ENCODE measurements at regions of chr11 and their contacts with region 1.

Region 1: GRCh38 chr11:130131961-130132850 is 27.4 kb upstream of the ST14 start:
- DNase-seq: peak; percentile 46
- H3K4me3 Mint-ChIP-seq: no peak overlapping the region
- H3K27ac Mint-ChIP-seq: no peak overlapping the region
- H3K4me1 Mint-ChIP-seq: no peaks in the 10 kb centered on the region
- H3K27me3 Mint-ChIP-seq: no peaks in the 10 kb centered on the region

Region 2: DNA sequence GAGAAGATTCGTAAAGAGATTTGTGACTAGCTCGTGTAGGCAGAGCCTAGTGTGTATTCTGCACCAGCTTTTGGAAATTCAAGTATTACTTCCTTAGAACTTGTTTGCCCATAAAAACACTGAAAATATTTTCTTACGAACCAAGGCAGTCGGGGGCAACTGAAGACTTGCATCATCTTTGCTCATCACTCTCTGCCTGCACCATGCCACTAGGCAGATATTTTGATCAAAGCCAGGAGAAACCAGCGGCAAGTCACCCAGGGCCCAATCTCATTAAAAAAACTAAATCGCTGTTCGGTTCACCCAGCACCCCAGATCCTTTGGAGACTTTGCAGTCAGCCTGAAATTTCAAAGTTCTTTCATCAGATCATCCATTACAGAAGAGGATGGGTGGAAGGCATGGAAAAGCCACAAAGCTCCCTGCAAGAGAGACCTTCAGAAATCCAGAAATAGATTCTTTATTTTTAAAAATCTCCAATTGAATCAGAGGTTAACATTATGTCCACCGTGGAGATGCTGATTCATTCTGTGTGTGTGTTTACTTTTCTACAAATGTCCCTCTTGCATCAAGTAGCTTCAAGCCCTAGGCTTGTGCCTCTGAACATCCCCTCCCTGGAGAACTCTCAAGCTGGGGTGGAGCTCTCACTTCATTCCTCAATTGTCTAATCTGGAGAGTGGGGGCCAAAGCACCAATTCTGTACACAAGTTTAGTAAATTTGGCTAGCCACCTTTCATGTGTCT is 1623.3 kb before region 1 on chr11:
- intact Hi-C with region 1: no loop called
- DNase-seq: no peak
- H3K4me3 Mint-ChIP-seq: peak overlapping the region; percentile 96
- H3K27ac Mint-ChIP-seq: peak overlapping the region; percentile 98
- H3K4me1 Mint-ChIP-seq: peaks cover 100% of the 10 kb centered on the region
- H3K27me3 Mint-ChIP-seq: peaks cover 1% of the 10 kb centered on the region

Region 3: GRCh38 chr11:129364143-129364654 is 768.0 kb before region 1 on chr11:
- intact Hi-C with region 1: loop called (anchors 5 kb)
- DNase-seq: peak; percentile 75
- H3K4me3 Mint-ChIP-seq: no peak overlapping the region
- H3K27ac Mint-ChIP-seq: no peak overlapping the region
- H3K4me1 Mint-ChIP-seq: no peaks in the 10 kb centered on the region
- H3K27me3 Mint-ChIP-seq: peaks cover 34% of the 10 kb centered on the region

Region 4: GRCh38 chr11:129766898-129767604 is 365.2 kb before region 1 on chr11:
- intact Hi-C with region 1: loop called (anchors 5 kb)
- DNase-seq: no peak
- H3K4me3 Mint-ChIP-seq: no peak overlapping the region
- H3K27ac Mint-ChIP-seq: no peak overlapping the region
- H3K4me1 Mint-ChIP-seq: no peaks in the 10 kb centered on the region
- H3K27me3 Mint-ChIP-seq: peaks cover 7% of the 10 kb centered on the region

Region 5: GRCh38 chr11:129785383-129786111 is 346.7 kb before region 1 on chr11:
- intact Hi-C with region 1: loop called (anchors 5 kb)
- DNase-seq: no peak
- H3K4me3 Mint-ChIP-seq: no peak overlapping the region
- H3K27ac Mint-ChIP-seq: no peak overlapping the region
- H3K4me1 Mint-ChIP-seq: no peaks in the 10 kb centered on the region
- H3K27me3 Mint-ChIP-seq: peaks cover 4% of the 10 kb centered on the region

Region 6: GRCh38 chr11:129815596-129816461 is 316.4 kb before region 1 on chr11 and contains the start of gene TMEM45B:
- intact Hi-C with region 1: no loop called
- DNase-seq: no peak
- H3K4me3 Mint-ChIP-seq: peak within 1 kb of the TSS; percentile 69
- H3K27ac Mint-ChIP-seq: peak within 1 kb of the TSS; percentile 67
- H3K4me1 Mint-ChIP-seq: peaks cover 26% of the 10 kb centered on the region
- H3K27me3 Mint-ChIP-seq: peaks cover 46% of the 10 kb centered on the region
- total RNA-seq, gene TMEM45B: 0.24 and 0.26 TPM in 2 replicates

Region 7: GRCh38 chr11:129881570-129882170 is 250.5 kb before region 1 on chr11:
- intact Hi-C with region 1: loop called (anchors 1 kb)
- DNase-seq: peak; percentile 28
- H3K4me3 Mint-ChIP-seq: no peak overlapping the region
- H3K27ac Mint-ChIP-seq: no peak overlapping the region
- H3K4me1 Mint-ChIP-seq: no peaks in the 10 kb centered on the region
- H3K27me3 Mint-ChIP-seq: no peaks in the 10 kb centered on the region

Region 8: GRCh38 chr11:129922674-129923073 is 209.5 kb before region 1 on chr11:
- intact Hi-C with region 1: loop called (anchors 1 kb)
- DNase-seq: no peak
- H3K4me3 Mint-ChIP-seq: no peak overlapping the region
- H3K27ac Mint-ChIP-seq: no peak overlapping the region
- H3K4me1 Mint-ChIP-seq: peaks cover 20% of the 10 kb centered on the region
- H3K27me3 Mint-ChIP-seq: no peaks in the 10 kb centered on the region

Region 9: GRCh38 chr11:130964058-130964792 is 832.0 kb after region 1 on chr11:
- intact Hi-C with region 1: no loop called
- DNase-seq: no peak
- H3K4me3 Mint-ChIP-seq: no peak overlapping the region
- H3K27ac Mint-ChIP-seq: no peak overlapping the region
- H3K4me1 Mint-ChIP-seq: no peaks in the 10 kb centered on the region
- H3K27me3 Mint-ChIP-seq: no peaks in the 10 kb centered on the region

Measured in activated T-helper 1 cell treated with anti-CD3 and anti-CD28 coated beads, Interleukin-12 subunit alpha, Interleukin-12 subunit beta, Interleukin-2, Interleukin-4 antibody, amounts not matched to agents 30 ng/mL and 10 ng/mL and 1 ng/mL, durations not matched to agents 14 hours and 24 hours and 36 hours (primary cell).